HEK293T (cell line): ENCODE measurements at regions of chr11 and their contacts with region 1.

Region 1: GRCh38 chr11:62665075-62665598 is at the starts of genes C11orf98 and CSKMT:
- DNase-seq: peak; percentile 94

Region 2: GRCh38 chr11:62567018-62567633 is 98.0 kb before region 1 on chr11:
- CTCF ChIA-PET with region 1: no interaction called
- POLR2A ChIA-PET with region 1: no interaction called
- DNase-seq: no peak

Region 3: DNA sequence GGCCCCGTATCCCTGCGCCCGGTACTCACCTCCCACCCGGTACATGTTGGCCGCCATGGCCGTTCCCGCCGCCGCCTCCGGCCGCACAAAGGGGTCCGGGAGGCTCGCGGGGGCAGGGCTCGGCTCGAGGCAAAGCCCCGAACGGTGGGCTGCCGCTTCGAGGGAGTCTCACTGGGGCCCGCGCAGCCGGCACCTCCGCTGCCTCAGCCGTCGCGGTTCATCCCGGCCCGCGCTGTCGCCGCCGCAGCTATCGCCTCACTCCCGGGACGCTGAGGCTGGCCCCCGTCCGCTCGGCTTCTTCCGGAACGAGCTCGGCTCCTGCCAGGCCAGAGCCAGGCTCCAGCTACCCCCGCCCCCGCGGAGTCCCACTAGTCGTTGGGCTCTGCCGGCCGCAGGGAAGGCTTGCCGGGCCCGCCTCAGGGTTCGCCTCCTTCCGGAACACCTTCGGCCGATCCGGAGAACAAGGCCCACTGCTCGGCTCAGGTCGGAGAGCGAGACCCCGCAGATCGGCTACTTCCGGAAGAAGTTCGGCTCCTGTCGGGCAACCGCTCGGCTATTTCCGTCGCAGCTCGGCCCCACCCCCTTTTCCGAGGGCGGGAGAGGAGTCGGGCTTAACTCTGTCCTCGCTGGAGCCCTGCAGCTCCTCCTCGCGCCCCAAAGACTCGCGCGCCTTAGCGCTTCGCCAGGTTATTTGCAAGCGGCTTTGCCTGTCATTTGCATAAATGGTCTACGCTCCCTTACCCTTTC is 63.6 kb before region 1 on chr11 and contains the start of gene MTA2:
- CTCF ChIA-PET with region 1: no interaction called
- POLR2A ChIA-PET with region 1: interaction called, 12 read pairs
- DNase-seq: peak; percentile 97

Region 4: GRCh38 chr11:62645956-62646824 is 18.9 kb before region 1 on chr11 and contains the start of gene GANAB:
- CTCF ChIA-PET with region 1: no interaction called
- POLR2A ChIA-PET with region 1: interaction called, 33 read pairs
- DNase-seq: peak; percentile 99

Region 5: DNA sequence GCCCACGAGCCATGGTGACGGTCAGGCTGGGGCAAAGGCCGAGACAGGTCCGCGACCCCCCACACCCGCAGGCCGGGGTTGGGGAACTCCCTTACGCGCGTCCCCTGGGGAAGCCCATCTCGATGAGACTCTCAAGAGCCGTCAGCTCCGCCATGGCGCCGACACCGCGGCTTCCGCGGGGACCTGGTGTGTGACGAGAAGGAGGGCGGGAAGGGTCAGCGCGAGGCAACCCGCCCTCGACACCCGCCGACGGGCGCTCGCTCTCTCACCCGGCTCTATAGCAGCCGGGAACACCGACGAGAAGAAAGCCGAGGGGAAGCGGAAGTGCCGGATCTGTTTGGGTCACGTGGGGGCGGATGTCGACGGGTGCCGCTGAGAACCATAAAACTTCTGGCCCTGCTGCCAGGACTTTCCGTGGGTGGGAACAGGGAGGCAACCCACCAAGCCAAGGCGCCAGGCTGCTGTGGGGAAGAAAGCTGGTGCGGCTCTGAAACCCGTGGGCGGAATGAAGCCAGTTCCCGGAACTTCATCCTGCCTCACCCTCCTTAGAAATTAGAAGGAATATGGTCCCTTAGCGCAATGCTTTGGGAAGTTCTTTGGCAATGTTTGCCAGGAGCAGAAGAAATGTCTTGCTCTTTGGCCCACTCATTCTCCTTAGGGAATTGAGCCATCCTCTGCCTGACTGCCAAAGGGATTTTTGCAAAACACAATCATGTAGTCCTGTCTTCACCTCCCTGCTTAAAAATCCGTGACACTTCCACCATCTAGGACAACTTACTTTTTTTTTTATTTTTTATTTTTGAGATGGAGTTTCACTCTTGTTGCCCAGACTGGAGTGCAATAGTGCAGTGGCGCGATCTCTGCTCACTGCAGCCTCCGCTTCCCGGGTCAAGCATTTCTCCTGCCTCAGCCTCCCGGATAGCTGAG is 13.9 kb after region 1 on chr11 and contains the start of gene UBXN1:
- CTCF ChIA-PET with region 1: no interaction called
- POLR2A ChIA-PET with region 1: interaction called, 61 read pairs
- DNase-seq: peak; percentile 84

Region 6: DNA sequence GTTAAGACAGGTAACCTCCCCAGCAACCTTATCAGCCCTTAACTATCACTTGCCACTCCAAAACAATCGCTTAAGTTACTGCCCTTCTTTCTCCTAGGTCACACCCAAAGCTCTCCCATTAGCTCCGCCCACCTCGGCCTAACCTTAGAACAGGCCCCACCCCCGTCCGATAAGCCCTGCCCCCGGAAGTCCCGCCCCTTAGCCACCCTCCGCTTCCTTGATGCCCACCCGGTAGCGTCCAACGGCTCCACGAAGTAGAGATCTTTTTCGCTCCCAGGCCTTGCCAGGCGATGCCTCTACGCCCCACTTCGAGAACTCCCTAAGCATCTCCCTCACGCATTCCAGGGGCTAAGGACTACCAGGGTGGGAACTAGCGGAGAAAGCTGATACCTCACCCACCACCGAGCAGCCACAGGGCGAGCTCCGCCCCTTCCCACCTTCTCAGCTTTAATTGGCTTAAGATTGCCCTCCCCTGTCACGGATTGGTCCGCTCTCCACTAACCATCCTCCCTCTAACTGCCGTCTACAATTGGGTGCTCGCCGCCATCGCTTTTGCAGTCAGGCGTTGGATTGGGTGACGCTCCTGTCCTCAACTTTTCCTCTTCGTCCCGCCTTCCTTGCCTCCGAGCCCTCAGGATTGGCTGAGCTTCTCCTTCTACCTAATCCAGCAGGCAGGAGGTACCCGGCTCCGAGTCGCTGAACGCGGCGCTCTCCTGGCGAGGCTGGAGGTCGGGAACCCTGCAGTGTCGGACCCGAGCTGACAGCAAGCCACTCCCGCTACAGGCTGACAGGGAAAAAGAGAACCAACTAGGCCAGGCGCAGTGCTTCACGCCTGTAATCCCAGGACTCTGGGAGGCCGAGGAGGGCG is 88.8 kb after region 1 on chr11 and contains the start of gene ZBTB3:
- CTCF ChIA-PET with region 1: no interaction called
- POLR2A ChIA-PET with region 1: interaction called, 10 read pairs
- DNase-seq: peak; percentile 94